Activated T-helper 1 cell treated with anti-CD3 and anti-CD28 coated beads, Interleukin-12 subunit alpha, Interleukin-12 subunit beta, Interleukin-2, Interleukin-4 antibody, amounts not matched to agents 30 ng/mL and 10 ng/mL and 1 ng/mL, durations not matched to agents 14 hours and 24 hours and 36 hours (primary cell): ENCODE measurements at regions of chrX and their contacts with region 1.

Region 1: DNA sequence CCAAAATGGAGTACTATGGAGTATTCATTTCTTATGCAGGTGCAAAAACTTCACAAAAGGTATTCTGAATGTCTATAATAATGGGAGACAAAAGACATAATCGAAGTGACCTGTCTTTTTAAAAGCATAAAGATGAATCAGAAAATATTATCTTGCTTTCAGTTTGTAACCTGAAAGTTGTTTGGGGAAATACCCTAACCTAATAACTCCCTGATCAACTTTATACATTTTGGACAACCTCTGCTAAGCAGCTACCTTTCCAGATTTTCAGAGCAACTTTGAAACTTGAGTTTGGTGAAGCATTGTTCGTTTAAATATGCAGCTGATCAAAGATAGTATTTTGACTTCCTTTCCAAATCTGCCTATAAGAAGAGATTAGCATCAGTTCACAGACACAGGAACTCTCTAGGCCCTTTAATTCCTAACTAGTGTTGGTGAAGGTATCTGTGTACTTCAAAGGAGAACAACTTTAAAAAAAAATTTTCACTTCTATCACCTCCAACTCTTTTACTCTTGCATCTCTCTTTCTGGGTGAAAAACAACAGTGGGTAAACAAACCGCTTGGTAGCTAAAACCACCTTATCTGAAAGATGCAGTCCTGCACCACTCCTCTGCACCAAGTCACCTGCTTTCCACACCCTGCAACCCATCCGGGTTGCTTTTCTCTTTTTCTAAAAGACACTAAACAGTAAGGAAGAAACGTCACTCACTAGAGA is 26.5 kb downstream of the CD40LG start:
- DNase-seq: no peak
- H3K4me3 Mint-ChIP-seq: peak overlapping the region; percentile 64
- H3K27ac Mint-ChIP-seq: peak overlapping the region; percentile 97
- H3K4me1 Mint-ChIP-seq: peaks cover 70% of the 10 kb centered on the region
- H3K27me3 Mint-ChIP-seq: no peaks in the 10 kb centered on the region

Region 2: DNA sequence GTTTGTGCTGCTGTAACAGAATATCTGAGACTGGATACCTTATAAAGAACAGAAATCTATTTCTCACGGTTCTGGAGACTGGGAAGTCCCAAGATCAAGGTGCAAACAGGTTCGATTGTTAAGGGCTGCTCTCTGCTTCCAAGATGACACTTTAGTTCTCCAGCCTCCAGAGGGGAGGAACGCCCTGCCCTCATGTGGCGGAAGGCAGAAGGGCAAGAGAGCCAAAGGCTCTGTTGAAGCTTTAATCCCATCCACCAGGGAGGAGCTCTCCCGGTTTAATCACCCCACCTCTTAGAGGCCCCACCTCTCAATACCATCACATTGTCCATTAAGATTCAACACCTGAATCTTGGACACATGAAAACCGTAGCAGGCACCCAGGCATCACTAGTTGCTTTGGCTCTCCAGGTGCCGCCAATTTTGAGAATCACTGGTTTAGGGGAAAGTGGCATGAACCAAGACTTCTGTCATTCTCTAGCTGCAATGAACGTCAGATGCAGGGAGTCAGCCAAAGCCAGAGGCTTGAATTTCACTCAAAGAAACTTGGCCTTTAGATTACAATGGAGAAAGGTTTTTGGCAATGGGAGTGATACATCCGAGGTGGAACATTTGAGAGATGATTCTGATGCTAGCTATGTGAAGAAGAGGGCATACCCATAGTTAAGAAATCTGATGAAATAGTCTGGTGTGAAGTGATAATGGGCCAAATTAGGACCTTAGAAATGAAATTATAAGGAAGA is 511.4 kb before region 1 on chrX:
- intact Hi-C with region 1: no loop called
- DNase-seq: peak; percentile 12
- H3K4me3 Mint-ChIP-seq: no peak overlapping the region
- H3K27ac Mint-ChIP-seq: no peak overlapping the region
- H3K4me1 Mint-ChIP-seq: no peaks in the 10 kb centered on the region
- H3K27me3 Mint-ChIP-seq: no peaks in the 10 kb centered on the region

Region 3: DNA sequence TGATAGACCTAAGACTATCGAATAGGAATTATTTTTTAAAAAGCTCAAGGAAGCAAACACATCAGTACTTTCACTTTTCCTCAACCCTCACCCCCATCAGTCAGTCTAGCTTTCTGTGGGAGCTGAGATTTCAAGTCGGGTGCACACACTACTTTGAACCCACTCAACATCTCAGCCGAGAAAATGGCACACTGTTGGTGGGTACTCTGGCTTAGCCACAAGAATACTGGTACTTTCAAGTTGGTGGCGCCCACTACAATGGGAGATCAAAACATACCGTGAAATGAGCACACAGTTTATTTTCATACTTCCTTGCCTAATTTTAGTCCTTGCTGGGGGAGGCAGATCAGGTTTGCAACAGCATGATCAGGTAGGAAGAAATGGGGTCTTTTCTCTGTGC is 16.3 kb before region 1 on chrX:
- intact Hi-C with region 1: loop called (anchors 1 kb)
- DNase-seq: no peak
- H3K4me3 Mint-ChIP-seq: peak overlapping the region; percentile 99
- H3K27ac Mint-ChIP-seq: peak overlapping the region; percentile 94
- H3K4me1 Mint-ChIP-seq: peaks cover 89% of the 10 kb centered on the region
- H3K27me3 Mint-ChIP-seq: no peaks in the 10 kb centered on the region